A549 (cell line): ENCODE measurements at regions of chr16 and their contacts with region 1.

Region 1: DNA sequence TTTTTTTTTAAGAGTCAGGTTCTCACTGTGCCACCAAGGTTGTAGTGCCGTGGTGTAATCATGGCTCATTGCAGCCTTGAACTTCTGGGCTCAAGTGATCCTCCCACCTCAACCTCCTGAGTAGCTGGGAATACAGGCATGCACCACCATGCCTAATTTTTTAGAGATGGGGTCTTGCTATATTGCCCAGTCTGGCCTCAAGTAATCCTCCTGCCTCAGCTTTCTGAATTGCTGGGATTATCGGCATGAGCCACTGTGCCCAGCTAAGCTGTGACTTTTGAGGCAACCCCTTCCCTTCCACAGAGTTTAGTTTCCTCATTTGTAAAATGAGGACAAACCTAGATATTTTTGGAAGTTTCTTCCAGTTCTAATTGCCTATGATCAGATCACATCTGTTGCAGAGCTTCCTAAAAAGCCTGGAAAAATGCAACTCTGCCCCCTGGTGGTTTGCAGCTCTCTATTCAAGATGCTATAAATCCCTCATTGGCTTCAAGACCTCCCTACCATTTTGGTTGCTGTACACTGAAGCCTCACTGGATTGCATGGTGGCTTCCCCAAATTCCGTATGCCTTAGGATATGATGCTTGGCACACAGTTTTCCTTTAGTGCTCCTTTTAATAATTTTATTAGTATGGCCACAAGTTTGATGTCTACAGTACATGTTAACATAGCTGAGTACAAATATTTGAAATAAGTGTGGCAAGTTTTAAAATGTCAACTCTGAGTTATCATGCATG is 19.3 kb downstream of the GDE1 start:
- DNase-seq: peak; percentile 71 to 82
- ATAC-seq: peak; percentile 88 to 95
- H3K4me3 ChIP-seq: no peak overlapping the region
- H3K27ac ChIP-seq: no peak overlapping the region
- H3K4me1 ChIP-seq: no peaks in the 10 kb centered on the region
- CTCF ChIP-seq: peak; percentile 92
- EP300 ChIP-seq: no peak
- POLR2A ChIP-seq: no peak
- RAD21 ChIP-seq: peak; percentile 87 to 88

Region 2: DNA sequence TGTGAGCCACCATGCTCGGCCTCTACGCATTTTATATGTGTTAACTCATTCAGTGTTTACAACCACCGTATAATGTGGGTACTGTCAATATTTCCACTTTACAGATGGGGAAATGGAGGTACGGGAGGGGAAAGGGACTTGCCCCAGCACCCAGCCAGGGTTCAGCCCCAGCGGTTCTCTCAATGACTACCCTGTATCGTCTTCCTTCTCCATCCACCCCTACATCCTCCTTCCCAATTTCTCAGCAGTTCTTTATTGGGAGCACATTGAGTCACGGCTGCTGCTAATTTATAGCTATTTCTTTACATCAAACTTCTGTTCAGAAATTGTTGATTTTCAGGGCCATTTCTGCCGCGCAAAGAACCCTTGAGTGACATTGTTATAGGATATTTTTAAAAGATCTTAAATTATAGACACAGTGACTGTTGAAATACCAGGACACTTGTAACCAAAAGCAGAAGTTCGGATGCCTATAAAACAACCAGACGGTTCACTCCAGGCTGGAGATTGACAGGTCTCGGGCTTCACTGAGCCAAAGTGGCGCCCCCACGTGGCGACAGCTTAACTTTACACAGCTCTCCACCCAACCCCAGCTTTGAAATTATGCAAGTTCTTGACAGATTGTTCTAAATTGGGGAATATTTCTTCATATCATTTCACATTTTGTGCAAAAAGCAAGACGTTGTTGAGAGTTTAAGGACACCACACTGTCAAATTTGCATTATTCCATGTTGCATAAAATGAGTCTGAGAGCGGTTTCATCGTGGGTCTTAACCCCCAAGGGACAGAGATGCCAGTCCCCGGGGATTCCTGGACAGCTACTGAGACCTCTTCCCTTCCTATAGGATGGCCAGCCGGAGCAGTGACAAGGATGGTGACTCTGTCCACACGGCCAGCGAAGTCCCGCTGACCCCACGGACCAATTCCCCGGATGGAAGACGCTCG is 322.7 kb before region 1 on chr16:
- CTCF ChIA-PET with region 1: interaction called, 11 read pairs
- POLR2A ChIA-PET with region 1: no interaction called
- DNase-seq: peak; percentile 70 to 76
- ATAC-seq: peak; percentile 70 to 90; a peak in 4 of 6 replicates
- H3K4me3 ChIP-seq: no peak overlapping the region
- H3K27ac ChIP-seq: no peak overlapping the region
- H3K4me1 ChIP-seq: peaks cover 14% of the 10 kb centered on the region
- CTCF ChIP-seq: peak; percentile 78
- EP300 ChIP-seq: no peak
- POLR2A ChIP-seq: no peak
- RAD21 ChIP-seq: peak; percentile 53 to 57; a peak in 4 of 5 replicates

Region 3: GRCh38 chr16:19382887-19383816 is 119.4 kb before region 1 on chr16:
- CTCF ChIA-PET with region 1: interaction called, 69 read pairs
- POLR2A ChIA-PET with region 1: no interaction called
- DNase-seq: no peak
- ATAC-seq: peak in 1 of 2 experiments; percentile 34; a peak in 3 of 6 replicates
- H3K4me3 ChIP-seq: no peak overlapping the region
- H3K27ac ChIP-seq: peak overlapping the region in 1 of 2 experiments; percentile 53; a peak in 3 of 6 replicates
- H3K4me1 ChIP-seq: peaks cover 19% of the 10 kb centered on the region
- CTCF ChIP-seq: no peak
- EP300 ChIP-seq: no peak
- POLR2A ChIP-seq: no peak
- RAD21 ChIP-seq: no peak

Region 4: DNA sequence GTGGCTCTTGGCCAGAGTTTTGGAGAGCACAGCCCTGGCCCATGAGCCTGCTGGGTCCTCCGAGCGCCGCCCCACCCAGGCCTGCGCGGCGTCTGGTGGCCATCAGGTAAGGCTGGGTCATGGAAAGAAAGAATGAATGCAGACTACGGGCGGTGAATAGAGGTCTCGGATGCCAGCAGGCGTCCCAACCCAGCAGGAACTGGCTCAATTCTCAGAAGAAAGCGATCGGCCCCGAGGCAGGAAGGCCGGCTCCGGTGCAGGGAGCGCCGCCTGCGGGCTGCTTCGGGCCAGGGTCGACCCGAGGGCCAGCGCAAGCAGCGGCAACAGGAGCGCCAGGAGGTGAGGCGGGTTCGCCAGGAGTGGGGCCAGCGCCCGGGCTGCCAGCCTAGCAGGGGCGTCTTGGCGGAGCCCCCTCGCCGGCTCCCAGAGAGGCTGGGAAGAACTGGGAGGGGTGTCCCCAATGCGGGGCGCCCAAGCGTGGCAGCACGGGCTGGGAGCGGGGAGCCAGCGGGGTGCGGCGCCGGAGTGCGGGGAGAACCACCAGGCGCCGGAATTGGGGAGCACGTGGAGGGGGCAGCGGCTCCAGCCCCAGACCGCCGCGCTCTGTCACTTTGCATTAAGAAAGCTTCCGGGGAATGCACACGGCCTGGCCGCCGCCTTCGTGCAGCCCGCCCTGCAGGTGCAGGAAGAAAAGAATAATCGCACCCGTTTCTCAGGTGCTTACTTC is 92.0 kb before region 1 on chr16:
- CTCF ChIA-PET with region 1: interaction called, 22 read pairs
- POLR2A ChIA-PET with region 1: no interaction called
- DNase-seq: peak; percentile 62 to 70
- ATAC-seq: peak; percentile 96
- H3K4me3 ChIP-seq: peak overlapping the region; percentile 59
- H3K27ac ChIP-seq: peak overlapping the region; percentile 86 to 95
- H3K4me1 ChIP-seq: peaks cover 35% of the 10 kb centered on the region
- CTCF ChIP-seq: peak; percentile 56
- EP300 ChIP-seq: no peak
- POLR2A ChIP-seq: peak; percentile 22; the same call in 1 of the 2 replicates
- RAD21 ChIP-seq: peak; percentile 43 to 71

Region 5: DNA sequence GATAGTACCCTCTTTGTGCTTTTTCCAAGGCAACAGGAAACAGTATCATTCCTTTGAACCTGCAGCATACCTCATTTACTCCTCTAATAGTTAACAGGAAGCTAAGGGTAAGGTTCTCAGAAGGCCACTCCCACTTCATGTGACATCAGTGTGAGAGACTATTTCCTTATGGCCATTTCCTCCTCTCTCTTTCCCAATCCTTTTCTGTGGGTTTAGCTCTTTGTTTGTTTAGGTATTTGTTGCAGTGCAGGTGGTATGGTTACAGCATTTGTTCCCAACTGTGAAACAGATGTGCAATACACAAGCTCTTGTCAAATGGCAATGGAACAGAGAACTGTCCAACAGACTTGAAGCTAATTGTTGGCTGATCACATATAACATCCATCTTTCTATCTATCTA is 70.1 kb before region 1 on chr16:
- CTCF ChIA-PET with region 1: interaction called, 13 read pairs
- POLR2A ChIA-PET with region 1: no interaction called
- DNase-seq: peak; percentile 49 to 90
- ATAC-seq: peak; percentile 82 to 93
- H3K4me3 ChIP-seq: no peak overlapping the region
- H3K27ac ChIP-seq: peak overlapping the region; percentile 49 to 62
- H3K4me1 ChIP-seq: peaks cover 40% of the 10 kb centered on the region
- CTCF ChIP-seq: no peak
- EP300 ChIP-seq: no peak
- POLR2A ChIP-seq: no peak
- RAD21 ChIP-seq: no peak

Region 6: DNA sequence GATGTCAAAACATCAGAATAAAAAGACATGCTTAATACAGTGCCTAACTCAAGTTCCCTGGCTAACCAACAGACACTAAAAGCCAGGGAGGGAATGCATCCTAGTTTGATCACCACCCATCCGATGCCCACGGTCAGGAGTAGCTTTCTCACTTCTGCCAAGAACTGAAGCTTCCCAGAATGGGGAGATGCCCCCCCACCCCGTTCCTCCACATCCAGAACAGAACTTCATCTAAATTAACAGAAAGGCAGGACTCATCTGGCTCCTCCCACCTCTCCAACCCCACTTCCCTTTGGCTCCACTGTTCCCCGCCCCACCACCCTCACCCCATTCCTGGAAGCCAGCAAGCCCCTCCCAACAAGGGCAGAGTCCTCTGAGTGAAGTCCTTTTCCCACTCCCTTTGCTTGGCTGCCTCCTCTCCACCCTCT is 14.3 kb before region 1 on chr16:
- CTCF ChIA-PET with region 1: interaction called, 46 read pairs
- POLR2A ChIA-PET with region 1: no interaction called
- DNase-seq: no peak
- ATAC-seq: no peak
- H3K4me3 ChIP-seq: no peak overlapping the region
- H3K27ac ChIP-seq: no peak overlapping the region
- H3K4me1 ChIP-seq: 0 out of 3 replicates have a peak, but pooled peaks cover 3% of the 10 kb centered on the region
- CTCF ChIP-seq: no peak
- EP300 ChIP-seq: no peak
- POLR2A ChIP-seq: no peak
- RAD21 ChIP-seq: no peak

Region 7: DNA sequence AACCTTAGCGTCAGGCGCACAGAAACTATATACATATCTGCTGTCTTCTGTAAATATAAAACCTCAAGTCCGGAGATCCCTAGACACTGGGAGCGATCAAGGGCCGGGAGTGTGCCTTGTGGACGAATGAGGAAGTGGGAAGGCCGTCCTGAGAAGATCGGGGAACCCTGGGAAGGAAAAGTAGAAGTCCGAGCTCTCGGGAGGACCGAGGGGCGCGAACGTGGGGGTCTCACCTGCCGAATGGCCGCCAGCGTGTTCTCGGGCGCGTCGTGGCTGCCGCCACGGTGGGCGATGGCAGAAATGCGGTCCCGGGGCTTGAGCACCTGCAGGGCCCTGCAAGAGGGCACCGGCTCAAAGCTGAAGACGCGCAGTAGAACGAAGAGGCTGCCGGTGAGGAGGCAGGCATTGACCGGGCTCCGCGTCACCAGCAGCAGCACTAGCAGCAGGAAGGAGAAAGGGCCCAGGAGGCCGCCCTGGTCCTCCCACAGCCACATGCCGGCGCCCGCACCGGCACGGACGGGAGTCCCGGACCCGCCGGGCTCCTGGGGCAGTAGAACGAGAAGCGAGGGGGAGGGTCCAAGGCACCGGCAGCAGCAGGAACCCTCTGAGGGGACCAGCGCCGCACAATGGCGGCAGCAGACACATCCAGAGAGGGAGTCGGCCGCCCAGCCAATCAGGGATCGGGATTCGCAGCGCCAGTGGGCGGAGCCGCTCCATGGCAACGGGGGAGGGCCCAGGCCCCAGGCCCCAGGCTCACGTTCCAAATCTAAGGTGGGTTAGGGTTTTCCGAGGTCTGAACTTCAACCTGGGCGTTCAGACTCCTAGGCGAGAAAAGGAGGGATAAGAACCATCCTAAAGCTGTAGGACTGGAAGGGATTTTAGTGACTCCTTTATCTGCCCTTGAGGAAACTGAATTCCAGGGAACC is 19.2 kb after region 1 on chr16 and contains the start of gene GDE1:
- CTCF ChIA-PET with region 1: interaction called, 24 read pairs
- POLR2A ChIA-PET with region 1: interaction called, 3 read pairs
- DNase-seq: peak; percentile 90 to 94
- ATAC-seq: peak; percentile 88 to 91
- H3K4me3 ChIP-seq: peak within 1 kb of the TSS; percentile 74
- H3K27ac ChIP-seq: peak within 1 kb of the TSS; percentile 85 to 96
- H3K4me1 ChIP-seq: peaks cover 64% of the 10 kb centered on the region
- CTCF ChIP-seq: no peak
- EP300 ChIP-seq: no peak
- POLR2A ChIP-seq: peak; percentile 87
- RAD21 ChIP-seq: no peak
- polyA plus RNA-seq, gene GDE1: 81.6 and 85.2 TPM in 2 replicates

Region 8: DNA sequence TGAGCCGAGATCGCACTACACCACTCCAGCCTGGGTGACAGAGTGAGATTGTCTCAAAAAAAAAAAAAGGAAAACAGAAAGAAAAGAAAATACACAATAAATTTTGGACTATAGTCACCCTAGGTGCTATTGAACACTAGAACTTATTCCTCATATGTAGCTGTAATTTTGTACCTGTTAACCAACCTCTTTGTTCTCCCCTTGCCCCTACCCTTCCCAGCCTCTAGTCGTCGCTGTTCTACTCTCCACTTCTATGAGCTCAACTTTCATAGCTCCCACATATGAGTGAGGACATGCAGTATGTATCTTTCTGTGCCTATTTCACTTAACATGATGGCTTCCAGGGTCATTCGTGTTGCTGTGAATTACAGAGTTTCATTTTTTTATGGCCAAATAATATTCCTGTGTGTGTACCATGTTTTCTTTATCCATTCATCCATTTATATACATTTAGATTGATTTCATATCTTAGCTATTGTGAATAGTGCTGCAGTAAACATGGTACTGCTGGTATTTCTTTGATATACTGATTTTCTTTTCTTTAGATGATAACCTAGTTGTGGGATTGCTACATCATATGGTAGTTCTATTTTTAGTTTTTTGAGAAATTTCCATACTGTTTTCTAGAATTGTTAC is 81.2 kb after region 1 on chr16:
- CTCF ChIA-PET with region 1: no interaction called
- POLR2A ChIA-PET with region 1: no interaction called
- DNase-seq: peak; percentile 30 to 68
- ATAC-seq: peak; percentile 95 to 97; a peak in 5 of 6 replicates
- H3K4me3 ChIP-seq: no peak overlapping the region
- H3K27ac ChIP-seq: no peak overlapping the region
- H3K4me1 ChIP-seq: no peaks in the 10 kb centered on the region
- CTCF ChIP-seq: peak; percentile 92
- EP300 ChIP-seq: no peak
- POLR2A ChIP-seq: no peak
- RAD21 ChIP-seq: peak; percentile 56 to 70

Region 9: GRCh38 chr16:19666477-19666876 is 163.9 kb after region 1 on chr16:
- CTCF ChIA-PET with region 1: no interaction called
- POLR2A ChIA-PET with region 1: no interaction called
- DNase-seq: no peak
- ATAC-seq: no peak
- H3K4me3 ChIP-seq: no peak overlapping the region
- H3K27ac ChIP-seq: no peak overlapping the region
- H3K4me1 ChIP-seq: no peaks in the 10 kb centered on the region
- CTCF ChIP-seq: no peak
- EP300 ChIP-seq: no peak
- POLR2A ChIP-seq: no peak
- RAD21 ChIP-seq: no peak

Region 10: GRCh38 chr16:19765860-19766553 is 263.4 kb after region 1 on chr16:
- CTCF ChIA-PET with region 1: no interaction called
- POLR2A ChIA-PET with region 1: no interaction called
- DNase-seq: no peak
- ATAC-seq: no peak
- H3K4me3 ChIP-seq: no peak overlapping the region
- H3K27ac ChIP-seq: no peak overlapping the region
- H3K4me1 ChIP-seq: no peaks in the 10 kb centered on the region
- CTCF ChIP-seq: no peak
- EP300 ChIP-seq: no peak
- POLR2A ChIP-seq: no peak
- RAD21 ChIP-seq: no peak